Transverse colon (tissue), 4 donors: ENCODE measurements at regions of chr11 and their contacts with region 1.

Region 1: GRCh38 chr11:33598426-33599069 is 102.1 kb downstream of the C11orf91 start:
- DNase-seq: no peak
- H3K4me3 ChIP-seq: no peak overlapping the region
- H3K27ac ChIP-seq: no peak overlapping the region
- H3K4me1 ChIP-seq: no peaks in the 10 kb centered on the region
- H3K27me3 ChIP-seq: peaks cover 23% of the 10 kb centered on the region
- CTCF ChIP-seq: no peak
- EP300 ChIP-seq: no peak
- POLR2A ChIP-seq: no peak

Region 2: DNA sequence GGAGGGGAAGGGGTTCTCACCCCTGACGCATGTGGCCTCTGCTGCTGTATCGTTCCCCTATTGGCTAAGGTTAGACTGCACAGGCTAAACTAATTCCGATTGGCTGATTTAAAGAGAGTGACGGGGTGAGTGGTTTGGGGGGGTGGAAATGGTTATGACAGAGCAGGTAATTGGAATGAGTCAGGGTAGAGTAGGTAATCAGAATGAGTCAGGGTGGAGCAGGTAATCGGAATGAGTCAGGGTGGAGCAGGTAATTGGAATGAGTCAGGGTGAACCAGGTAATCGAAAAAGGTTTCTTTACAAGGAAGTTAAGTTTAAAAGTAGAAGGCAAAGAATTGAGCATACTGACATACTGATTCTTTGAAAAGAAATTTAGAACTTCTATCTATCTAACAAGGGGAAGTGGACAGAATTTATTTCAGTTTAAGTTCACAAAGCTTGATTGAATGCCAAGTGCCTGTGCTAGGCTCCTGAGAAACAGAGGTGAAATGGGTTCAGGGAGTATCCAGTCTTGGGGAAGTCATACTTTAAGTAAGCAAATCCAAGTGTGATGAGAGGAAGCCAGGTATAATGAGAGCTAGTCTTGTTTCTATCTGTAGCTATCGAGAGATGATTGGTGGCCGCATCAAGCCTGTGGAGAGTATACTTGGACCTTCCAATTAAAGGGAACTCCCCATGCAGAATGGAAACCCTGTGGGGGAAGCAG is 44.1 kb after region 1 on chr11:
- in situ Hi-C with region 1: loop called in 1 of 4 experiments (anchors 10 kb)
- intact Hi-C with region 1: no loop called
- DNase-seq: no peak
- H3K4me3 ChIP-seq: no peak overlapping the region
- H3K27ac ChIP-seq: peak overlapping the region in 1 of 4 donors; percentile 58
- H3K4me1 ChIP-seq: no peaks in the 10 kb centered on the region
- H3K27me3 ChIP-seq: peaks cover 6% of the 10 kb centered on the region
- CTCF ChIP-seq: no peak
- EP300 ChIP-seq: no peak
- POLR2A ChIP-seq: no peak